Activated CD8-positive, alpha-beta T cell treated with anti-CD3 and anti-CD28 coated beads for 36 hours (primary cell): ENCODE measurements at regions of chr11 and their contacts with region 1.

Region 1: DNA sequence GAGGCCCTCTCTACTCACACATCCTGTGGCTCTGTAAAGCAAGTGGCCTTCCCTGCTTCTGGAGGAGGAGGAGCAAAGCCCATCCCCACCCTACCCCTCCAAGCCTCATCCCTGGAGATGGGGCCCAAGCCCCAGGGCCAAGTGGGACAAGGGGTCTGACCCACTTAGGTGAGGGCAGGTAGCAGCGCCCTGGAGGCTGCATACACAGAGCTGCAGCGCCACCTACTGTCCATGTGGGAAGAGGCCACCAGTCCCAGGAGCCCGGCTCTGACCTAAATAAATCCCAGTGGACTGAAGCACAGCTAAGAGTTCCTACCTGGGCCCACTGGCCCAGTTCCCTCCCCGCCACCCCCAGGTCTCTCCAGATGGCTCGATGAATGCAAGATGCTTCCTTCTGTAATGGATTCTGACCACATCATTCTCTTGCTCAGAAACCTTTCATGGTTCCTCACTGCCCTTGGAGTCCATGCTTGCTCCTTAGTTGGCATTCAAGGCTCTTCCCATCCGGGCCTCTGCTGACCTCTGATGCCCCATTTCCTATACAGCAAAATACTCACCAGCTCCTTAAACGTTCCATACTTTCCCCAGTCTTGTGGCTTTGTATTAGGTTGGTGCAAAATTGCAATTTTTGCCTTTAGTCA is 62.1 kb downstream of the THAP12 start:
- DNase-seq: peak; percentile 91
- ATAC-seq: peak; percentile 98
- H3K4me3 Mint-ChIP-seq: no peak overlapping the region
- H3K27ac Mint-ChIP-seq: no peak overlapping the region
- H3K4me1 Mint-ChIP-seq: no peaks in the 10 kb centered on the region
- H3K27me3 Mint-ChIP-seq: peaks cover 37% of the 10 kb centered on the region
- CTCF ChIP-seq: peak; percentile 88

Region 2: GRCh38 chr11:75879737-75880136 is 439.1 kb before region 1 on chr11:
- CTCF ChIA-PET with region 1: no interaction called
- POLR2A ChIA-PET with region 1: no interaction called
- intact Hi-C with region 1: loop called (anchors 10 kb)
- DNase-seq: no peak
- ATAC-seq: no peak
- H3K4me3 Mint-ChIP-seq: no peak overlapping the region
- H3K27ac Mint-ChIP-seq: no peak overlapping the region
- H3K4me1 Mint-ChIP-seq: peaks cover 6% of the 10 kb centered on the region
- H3K27me3 Mint-ChIP-seq: no peaks in the 10 kb centered on the region
- CTCF ChIP-seq: no peak

Region 3: DNA sequence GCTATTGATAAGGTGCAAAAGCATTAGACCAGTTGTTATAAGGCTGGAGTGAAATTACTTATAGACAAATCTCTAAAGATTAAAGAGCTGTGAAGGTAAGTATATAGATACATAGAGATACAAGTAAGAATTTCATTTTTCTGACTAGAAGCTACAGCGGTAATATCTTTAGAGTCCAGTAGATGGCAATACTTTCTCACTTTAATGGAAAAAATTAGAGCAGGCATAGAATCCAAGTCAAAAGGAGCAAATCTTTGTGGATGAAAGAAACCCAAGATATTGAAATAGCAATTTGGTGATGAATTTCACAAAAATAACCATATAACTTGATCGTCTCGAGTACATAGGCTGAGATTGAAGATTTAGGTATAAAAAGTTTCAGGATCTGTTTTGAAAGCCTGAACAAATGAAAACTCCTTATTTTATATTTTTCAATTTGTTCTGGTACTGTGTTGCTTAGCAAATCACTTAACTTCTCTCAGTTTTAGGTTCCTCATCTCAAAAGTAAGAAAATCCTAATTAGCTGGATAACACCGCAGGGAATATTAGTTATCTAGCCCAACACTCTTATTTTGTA is 421.9 kb before region 1 on chr11:
- CTCF ChIA-PET with region 1: interaction called, 13 read pairs
- POLR2A ChIA-PET with region 1: no interaction called
- intact Hi-C with region 1: no loop called
- DNase-seq: no peak
- ATAC-seq: peak; percentile 49
- H3K4me3 Mint-ChIP-seq: no peak overlapping the region
- H3K27ac Mint-ChIP-seq: no peak overlapping the region
- H3K4me1 Mint-ChIP-seq: peaks cover 31% of the 10 kb centered on the region
- H3K27me3 Mint-ChIP-seq: no peaks in the 10 kb centered on the region
- CTCF ChIP-seq: peak; percentile 83

Region 4: GRCh38 chr11:76361374-76361773 is 42.5 kb after region 1 on chr11:
- CTCF ChIA-PET with region 1: interaction called, 10 read pairs
- POLR2A ChIA-PET with region 1: interaction called, 3 read pairs
- intact Hi-C with region 1: no loop called
- DNase-seq: no peak
- ATAC-seq: no peak
- H3K4me3 Mint-ChIP-seq: no peak overlapping the region
- H3K27ac Mint-ChIP-seq: peak overlapping the region; percentile 22
- H3K4me1 Mint-ChIP-seq: peaks cover 24% of the 10 kb centered on the region
- H3K27me3 Mint-ChIP-seq: no peaks in the 10 kb centered on the region
- CTCF ChIP-seq: no peak

Region 5: GRCh38 chr11:76380967-76381719 is 62.3 kb after region 1 on chr11 and contains the starts of genes GVQW3 and THAP12:
- CTCF ChIA-PET with region 1: no interaction called
- POLR2A ChIA-PET with region 1: no interaction called
- intact Hi-C with region 1: no loop called
- DNase-seq: peak; percentile 97
- ATAC-seq: peak; percentile 88
- H3K4me3 Mint-ChIP-seq: peak within 1 kb of the TSS; percentile 90
- H3K27ac Mint-ChIP-seq: peak within 1 kb of the TSS; percentile 97
- H3K4me1 Mint-ChIP-seq: peaks cover 48% of the 10 kb centered on the region
- H3K27me3 Mint-ChIP-seq: no peaks in the 10 kb centered on the region
- CTCF ChIP-seq: no peak
- total RNA-seq, gene GVQW3: 2.1 to 4.2 TPM
- total RNA-seq, gene THAP12: 50.3 TPM

Region 6: DNA sequence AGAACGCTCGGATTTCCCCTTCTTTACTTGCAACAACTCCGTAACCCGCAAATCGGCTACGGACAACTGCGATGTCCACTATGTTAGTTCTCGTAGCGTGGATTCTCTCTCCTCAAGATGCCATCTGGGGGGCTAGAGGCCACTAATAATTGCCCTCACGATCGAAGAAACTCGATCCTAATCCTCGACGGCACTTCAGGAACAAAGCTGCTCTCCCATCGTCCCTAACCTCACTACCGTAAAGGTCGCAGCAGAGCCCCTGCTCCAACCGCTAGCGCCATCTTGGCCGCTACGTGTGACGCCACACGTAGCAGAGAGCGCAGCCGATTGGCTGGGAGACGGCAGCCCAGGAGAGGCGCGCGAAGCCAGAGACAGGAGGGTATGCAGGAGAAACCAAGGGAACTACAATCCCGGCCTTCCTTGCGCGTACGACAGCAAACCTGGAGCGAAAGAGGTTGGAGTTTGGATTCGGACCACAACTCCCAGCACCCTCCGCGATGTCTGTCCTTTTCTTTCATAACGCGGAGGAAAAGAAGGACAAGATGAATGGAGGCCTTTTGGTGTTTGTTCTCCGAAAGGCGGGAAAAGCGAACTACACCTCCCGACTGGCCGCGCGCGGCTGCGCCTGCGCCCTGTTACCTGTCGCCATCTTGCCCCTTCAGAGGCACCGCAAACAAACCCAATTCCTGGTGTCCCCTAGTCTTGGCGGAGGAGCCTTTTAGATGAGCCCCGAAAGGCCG is 125.7 kb after region 1 on chr11 and contains the start of gene EMSY:
- CTCF ChIA-PET with region 1: no interaction called
- POLR2A ChIA-PET with region 1: no interaction called
- intact Hi-C with region 1: no loop called
- DNase-seq: peak; percentile 94
- ATAC-seq: peak; percentile 93
- H3K4me3 Mint-ChIP-seq: peak within 1 kb of the TSS; percentile 84
- H3K27ac Mint-ChIP-seq: peak within 1 kb of the TSS; percentile 91
- H3K4me1 Mint-ChIP-seq: peaks cover 26% of the 10 kb centered on the region
- H3K27me3 Mint-ChIP-seq: no peaks in the 10 kb centered on the region
- CTCF ChIP-seq: no peak
- total RNA-seq, gene EMSY: 29.0 to 31.4 TPM